ENCODE measurements at regions of chr18 and their contacts with region 1.

Region 1: DNA sequence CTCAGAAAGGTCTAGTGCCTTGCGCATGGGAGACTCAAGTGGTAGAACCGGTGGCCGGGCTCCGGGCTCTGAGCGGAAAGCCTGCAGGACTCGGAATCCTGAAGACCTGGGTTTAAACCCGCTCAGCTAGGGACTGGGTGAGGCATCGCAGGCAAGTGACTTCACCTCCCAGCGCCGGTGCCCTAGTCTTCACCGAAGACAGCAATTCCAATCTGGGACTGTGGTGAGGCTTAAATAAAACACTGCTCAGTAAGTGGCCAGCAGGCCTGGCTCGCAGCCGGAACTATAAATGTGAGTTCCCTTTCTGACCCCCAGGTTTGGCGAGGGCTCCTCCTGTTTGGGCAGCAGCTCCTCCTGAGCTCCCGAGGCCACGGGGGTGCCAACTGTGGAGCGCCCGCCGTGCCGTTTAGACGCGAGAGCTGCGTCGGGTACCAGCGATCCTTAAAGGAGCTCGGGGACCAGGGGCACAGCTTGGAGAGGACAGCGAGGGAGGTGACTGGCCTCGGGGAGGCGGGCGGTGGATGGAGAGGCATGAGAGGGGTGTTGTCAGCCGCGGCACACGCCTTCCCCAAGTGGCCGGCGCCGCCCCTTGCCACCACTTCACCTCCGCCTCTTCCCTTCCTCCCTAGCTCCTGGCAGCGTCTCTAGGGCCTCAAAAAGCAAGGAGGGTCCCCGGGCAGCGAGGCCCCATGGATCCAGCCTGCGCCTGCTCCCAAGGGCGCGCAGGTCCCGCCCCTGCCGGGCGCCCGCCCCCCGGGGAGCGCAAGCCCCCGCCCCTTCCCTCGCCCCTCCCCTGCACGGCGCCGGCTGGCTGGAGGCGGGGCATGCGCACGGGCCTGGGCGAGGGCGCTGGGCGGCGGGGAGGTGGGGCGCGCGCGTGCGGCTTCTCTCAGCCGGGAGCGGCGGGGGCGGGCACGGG is 736 bp upstream of the MTCL1 start:
- DNase-seq: peak; percentile 90
- ATAC-seq: peak; percentile 90
- H3K4me3 ChIP-seq: peak overlapping the region; percentile 43 to 89 (median 64)
- H3K4me3 Mint-ChIP-seq: peak overlapping the region; percentile 96
- H3K27ac ChIP-seq: peak overlapping the region; percentile 35 to 40
- H3K27ac Mint-ChIP-seq: peak overlapping the region; percentile 88
- H3K4me1 ChIP-seq: peaks cover 22 to 27% of the 10 kb centered on the region in 2 donors
- H3K4me1 Mint-ChIP-seq: peaks cover 27% of the 10 kb centered on the region
- H3K27me3 ChIP-seq: peaks cover 0 to 38% (median 19%) of the 10 kb centered on the region in 4 experiments
- H3K27me3 Mint-ChIP-seq: peaks cover 30% of the 10 kb centered on the region
- CTCF ChIP-seq: no peak

Region 2: DNA sequence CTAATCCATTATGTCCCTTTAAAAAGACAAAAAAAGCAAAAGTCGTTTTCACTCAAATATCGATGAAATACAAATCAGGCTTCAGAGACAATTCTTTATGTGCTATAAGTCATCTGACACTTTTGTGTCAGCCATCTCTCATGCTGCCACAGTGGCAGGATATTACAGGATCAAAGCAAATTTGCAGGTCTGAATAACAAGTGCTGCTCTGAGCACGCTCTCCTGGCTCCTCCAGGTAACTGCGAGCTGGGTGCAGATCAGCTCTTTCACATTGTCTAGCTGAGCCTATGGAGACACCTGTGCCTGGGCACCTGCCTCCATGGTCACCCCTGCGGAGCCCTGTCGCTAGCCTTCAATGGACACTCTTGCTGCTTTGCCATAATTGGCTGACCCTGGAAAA is 345.5 kb before region 1 on chr18:
- CTCF ChIA-PET with region 1: no interaction called
- POLR2A ChIA-PET with region 1: no interaction called
- intact Hi-C with region 1: no loop called
- DNase-seq: no peak
- ATAC-seq: no peak
- H3K4me3 ChIP-seq: no peak overlapping the region
- H3K4me3 Mint-ChIP-seq: no peak overlapping the region
- H3K27ac ChIP-seq: no peak overlapping the region
- H3K27ac Mint-ChIP-seq: no peak overlapping the region
- H3K4me1 ChIP-seq: no peaks in the 10 kb centered on the region
- H3K4me1 Mint-ChIP-seq: no peaks in the 10 kb centered on the region
- H3K27me3 ChIP-seq: peaks cover 0 to 9% (median 3%) of the 10 kb centered on the region in 4 experiments
- H3K27me3 Mint-ChIP-seq: peaks cover 13% of the 10 kb centered on the region
- CTCF ChIP-seq: no peak

Region 3: GRCh38 chr18:8608795-8609658 is 95.6 kb before region 1 on chr18 and contains the start of gene RAB12:
- CTCF ChIA-PET with region 1: no interaction called
- POLR2A ChIA-PET with region 1: no interaction called
- intact Hi-C with region 1: loop called (anchors 1 kb)
- DNase-seq: peak; percentile 90
- ATAC-seq: peak; percentile 83
- H3K4me3 ChIP-seq: peak within 1 kb of the TSS; percentile 40 to 88 (median 76)
- H3K4me3 Mint-ChIP-seq: peak within 1 kb of the TSS; percentile 91
- H3K27ac ChIP-seq: peak within 1 kb of the TSS; percentile 42 to 72
- H3K27ac Mint-ChIP-seq: peak within 1 kb of the TSS; percentile 87
- H3K4me1 ChIP-seq: peaks cover 60 to 62% of the 10 kb centered on the region in 2 donors
- H3K4me1 Mint-ChIP-seq: peaks cover 72% of the 10 kb centered on the region
- H3K27me3 ChIP-seq: no peaks in the 10 kb centered on the region
- H3K27me3 Mint-ChIP-seq: no peaks in the 10 kb centered on the region
- CTCF ChIP-seq: peak; percentile 73
- total RNA-seq, gene RAB12: 38.7 and 40.9 TPM in 2 replicates

Region 4: GRCh38 chr18:8982416-8983184 is 278.0 kb after region 1 on chr18:
- CTCF ChIA-PET with region 1: interaction called, 21 read pairs
- POLR2A ChIA-PET with region 1: no interaction called
- intact Hi-C with region 1: no loop called
- DNase-seq: peak; percentile 74
- ATAC-seq: peak; percentile 71
- H3K4me3 ChIP-seq: no peak overlapping the region
- H3K4me3 Mint-ChIP-seq: no peak overlapping the region
- H3K27ac ChIP-seq: no peak overlapping the region
- H3K27ac Mint-ChIP-seq: peak overlapping the region; percentile 20
- H3K4me1 ChIP-seq: peaks cover 22 to 26% of the 10 kb centered on the region in 2 donors
- H3K4me1 Mint-ChIP-seq: peaks cover 27% of the 10 kb centered on the region
- H3K27me3 ChIP-seq: no peaks in the 10 kb centered on the region
- H3K27me3 Mint-ChIP-seq: no peaks in the 10 kb centered on the region
- CTCF ChIP-seq: peak; percentile 52

Region 5: DNA sequence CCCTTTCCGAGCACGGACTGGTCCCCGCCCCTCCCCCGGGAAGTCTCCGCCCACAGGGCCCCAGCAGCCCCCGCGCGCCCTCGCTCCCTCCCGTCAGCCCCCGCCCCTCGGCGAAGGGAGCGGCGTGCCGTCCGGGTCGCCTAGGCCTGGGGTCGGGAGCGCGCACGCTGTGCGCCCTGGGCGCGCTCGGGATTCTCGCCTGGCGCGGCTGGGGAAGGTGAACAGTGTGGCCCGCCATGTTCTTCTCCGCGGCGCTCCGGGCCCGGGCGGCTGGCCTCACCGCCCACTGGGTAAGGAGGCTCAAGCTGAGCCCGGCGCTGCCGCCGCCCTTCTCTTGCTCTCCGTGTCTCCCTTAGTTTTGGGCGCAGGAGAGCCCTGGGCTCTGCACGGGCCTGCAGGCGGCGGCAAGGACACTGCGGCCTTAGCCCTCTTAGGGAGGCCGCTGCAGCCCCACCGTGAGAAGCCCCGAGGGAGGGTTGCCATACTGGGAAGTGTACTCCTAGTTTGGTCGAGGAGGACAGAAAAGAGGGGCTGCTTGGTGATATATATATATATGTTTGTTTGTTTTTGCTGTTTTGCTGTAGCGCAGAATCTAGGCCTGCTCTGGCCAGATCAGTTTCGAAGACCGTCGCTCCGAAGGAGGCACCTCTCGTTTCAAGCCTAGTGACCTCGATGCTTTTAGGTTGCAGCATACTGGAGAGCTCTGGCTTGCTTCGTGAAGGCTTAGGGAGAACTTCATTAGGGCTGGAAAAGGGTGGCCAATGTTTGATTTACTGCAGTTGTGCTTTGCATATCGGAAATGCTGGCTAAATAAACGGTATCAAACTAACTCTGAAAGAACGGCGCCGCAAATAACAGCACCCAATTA is 398.1 kb after region 1 on chr18 and contains the start of gene NDUFV2:
- CTCF ChIA-PET with region 1: no interaction called
- POLR2A ChIA-PET with region 1: no interaction called
- intact Hi-C with region 1: loop called (anchors 5 kb)
- DNase-seq: peak; percentile 96
- ATAC-seq: peak; percentile 96
- H3K4me3 ChIP-seq: peak within 1 kb of the TSS; percentile 77 to 98 (median 88)
- H3K4me3 Mint-ChIP-seq: peak within 1 kb of the TSS; percentile 95
- H3K27ac ChIP-seq: peak within 1 kb of the TSS; percentile 80 to 86
- H3K27ac Mint-ChIP-seq: peak within 1 kb of the TSS; percentile 93
- H3K4me1 ChIP-seq: peaks cover 43 to 50% of the 10 kb centered on the region in 2 donors
- H3K4me1 Mint-ChIP-seq: peaks cover 54% of the 10 kb centered on the region
- H3K27me3 ChIP-seq: no peaks in the 10 kb centered on the region
- H3K27me3 Mint-ChIP-seq: no peaks in the 10 kb centered on the region
- CTCF ChIP-seq: no peak
- total RNA-seq, gene NDUFV2: 135 and 137 TPM in 2 replicates

Region 6: DNA sequence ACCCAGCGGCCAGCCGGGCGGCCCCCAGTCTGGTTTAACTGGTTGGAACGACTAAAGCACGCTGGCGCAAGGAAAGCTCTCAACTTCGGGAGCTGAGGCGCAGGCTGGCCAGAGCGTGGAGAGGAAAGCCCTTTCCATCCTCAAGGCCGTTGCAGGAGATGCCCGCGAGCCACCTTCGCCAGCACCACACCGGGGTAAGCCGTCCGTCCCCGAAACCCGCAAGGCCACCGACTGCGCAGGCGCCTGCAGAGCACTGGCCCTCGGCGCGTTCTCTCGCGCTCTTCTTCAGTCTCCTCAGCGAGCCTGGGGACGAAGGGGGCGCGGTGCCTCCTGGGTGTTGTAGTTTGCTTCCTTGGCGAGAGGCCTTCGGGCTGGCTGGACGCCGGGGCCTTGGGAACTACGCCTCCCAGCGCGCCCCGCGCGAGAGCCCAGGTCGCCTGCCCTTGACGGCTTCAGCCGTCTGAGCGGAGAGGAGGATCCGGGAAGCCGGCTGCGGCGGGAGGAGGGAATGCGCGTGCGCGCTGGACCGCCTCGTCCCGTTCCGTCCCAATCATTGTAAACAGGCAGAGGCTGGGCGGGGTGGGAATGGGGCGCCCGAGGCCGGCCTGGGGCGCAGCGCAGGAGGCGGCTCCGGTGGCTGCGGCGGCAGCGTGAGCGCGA is 770.5 kb after region 1 on chr18 and contains the start of gene RALBP1:
- CTCF ChIA-PET with region 1: no interaction called
- POLR2A ChIA-PET with region 1: no interaction called
- intact Hi-C with region 1: loop called (anchors 2 kb)
- DNase-seq: peak; percentile 98
- ATAC-seq: peak; percentile 96
- H3K4me3 ChIP-seq: peak within 1 kb of the TSS; percentile 72 to 97 (median 92)
- H3K4me3 Mint-ChIP-seq: peak within 1 kb of the TSS; percentile 99
- H3K27ac ChIP-seq: peak within 1 kb of the TSS; percentile 64 to 78
- H3K27ac Mint-ChIP-seq: peak within 1 kb of the TSS; percentile 98
- H3K4me1 ChIP-seq: peaks cover 5 to 19% of the 10 kb centered on the region in 2 donors
- H3K4me1 Mint-ChIP-seq: peaks cover 39% of the 10 kb centered on the region
- H3K27me3 ChIP-seq: peaks cover 0 to 3% (median 0%) of the 10 kb centered on the region in 4 experiments
- H3K27me3 Mint-ChIP-seq: peaks cover 17% of the 10 kb centered on the region
- CTCF ChIP-seq: no peak
- total RNA-seq, gene RALBP1: 36.3 and 38.0 TPM in 2 replicates